ENCODE measurements at regions of chr11 and their contacts with region 1.

Region 1: GRCh38 chr11:44036811-44037657 is 10.7 kb upstream of the ACCSL start:
- DNase-seq: peak; percentile 82
- ATAC-seq: peak; percentile 99
- H3K4me3 ChIP-seq: no peak overlapping the region
- H3K27ac ChIP-seq: no peak overlapping the region
- H3K4me1 ChIP-seq: peaks cover 5% of the 10 kb centered on the region; the same call in 1 of the 2 replicates
- H3K27me3 ChIP-seq: peaks cover 14% of the 10 kb centered on the region
- CTCF ChIP-seq: peak; percentile 94
- POLR2A ChIP-seq: peak; percentile 40; the same call in 1 of the 2 replicates
- RAD21 ChIP-seq: peak; percentile 97

Region 2: DNA sequence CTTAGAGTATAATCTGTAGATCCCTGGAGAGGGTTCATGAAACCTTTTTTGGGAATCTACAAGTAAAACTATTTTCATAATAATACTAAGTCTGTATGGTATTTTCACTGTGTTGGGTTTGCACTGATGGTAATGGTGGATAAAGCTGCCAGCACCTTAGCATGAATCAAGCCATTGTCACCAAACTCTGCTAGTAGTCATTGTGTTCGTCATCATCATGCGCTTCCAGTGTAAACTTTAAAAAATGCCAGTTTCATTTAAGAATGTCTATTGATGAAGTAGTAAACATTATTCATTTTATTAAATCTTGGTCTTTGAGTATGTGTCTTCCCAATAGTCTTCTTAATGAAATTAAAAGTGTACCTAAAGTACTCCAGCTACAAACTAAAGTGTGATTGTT is 141.4 kb before region 1 on chr11:
- CTCF ChIA-PET with region 1: interaction called, 8 read pairs
- POLR2A ChIA-PET with region 1: no interaction called
- dilution Hi-C with region 1: loop called (anchors 25 kb)
- in situ Hi-C with region 1: no loop called
- intact Hi-C with region 1: loop called (anchors 1 kb)
- DNase-seq: no peak
- ATAC-seq: no peak
- H3K4me3 ChIP-seq: no peak overlapping the region
- H3K27ac ChIP-seq: no peak overlapping the region
- H3K4me1 ChIP-seq: no peaks in the 10 kb centered on the region
- H3K27me3 ChIP-seq: no peaks in the 10 kb centered on the region
- CTCF ChIP-seq: no peak
- POLR2A ChIP-seq: no peak
- RAD21 ChIP-seq: no peak

Region 3: GRCh38 chr11:43920598-43921419 is 116.2 kb before region 1 on chr11:
- CTCF ChIA-PET with region 1: no interaction called
- POLR2A ChIA-PET with region 1: no interaction called
- dilution Hi-C with region 1: loop called (anchors 25 kb)
- in situ Hi-C with region 1: no loop called
- intact Hi-C with region 1: no loop called
- DNase-seq: peak; percentile 100
- ATAC-seq: peak; percentile 79
- H3K4me3 ChIP-seq: no peak overlapping the region
- H3K27ac ChIP-seq: peak overlapping the region; percentile 46; the same call in 1 of the 2 replicates
- H3K4me1 ChIP-seq: peaks cover 45% of the 10 kb centered on the region
- H3K27me3 ChIP-seq: no peaks in the 10 kb centered on the region
- CTCF ChIP-seq: no peak
- POLR2A ChIP-seq: no peak
- RAD21 ChIP-seq: no peak

Region 4: DNA sequence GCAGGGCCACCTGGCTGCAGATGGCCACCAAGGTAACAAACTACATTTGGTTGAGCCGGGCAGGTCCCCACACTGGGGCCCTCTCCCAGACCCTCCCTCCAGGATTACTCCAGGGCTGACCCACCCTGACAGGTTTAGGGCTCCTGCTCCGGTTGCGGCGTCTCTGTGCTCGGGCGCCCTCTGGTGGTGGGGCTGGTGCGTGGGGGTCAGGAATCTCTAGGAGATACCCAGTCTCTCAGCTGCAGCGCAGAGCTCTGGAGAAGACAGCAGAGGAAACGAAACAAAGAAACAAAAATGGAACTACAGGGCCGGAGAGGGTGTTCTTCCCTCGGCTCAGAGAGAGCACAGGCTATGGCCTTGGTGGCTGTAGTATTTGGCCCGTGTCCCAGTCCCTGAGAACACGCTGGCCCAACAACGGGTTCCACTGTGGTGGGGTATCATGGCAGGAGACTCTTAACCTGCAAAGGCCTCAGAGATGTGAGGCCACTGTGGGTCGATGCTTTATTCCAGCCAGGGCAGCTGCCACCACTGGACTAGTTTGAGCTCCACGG is 92.2 kb before region 1 on chr11:
- CTCF ChIA-PET with region 1: no interaction called
- POLR2A ChIA-PET with region 1: no interaction called
- dilution Hi-C with region 1: no loop called
- in situ Hi-C with region 1: no loop called
- intact Hi-C with region 1: loop called (anchors 2 kb)
- DNase-seq: peak; percentile 27
- ATAC-seq: peak; percentile 29; the same call in 1 of the 2 replicates
- H3K4me3 ChIP-seq: no peak overlapping the region
- H3K27ac ChIP-seq: no peak overlapping the region
- H3K4me1 ChIP-seq: peaks cover 5% of the 10 kb centered on the region; the same call in 1 of the 2 replicates
- H3K27me3 ChIP-seq: peaks cover 61% of the 10 kb centered on the region
- CTCF ChIP-seq: peak; percentile 69
- POLR2A ChIP-seq: peak; percentile 70; the same call in 1 of the 2 replicates
- RAD21 ChIP-seq: peak; percentile 58

Region 5: DNA sequence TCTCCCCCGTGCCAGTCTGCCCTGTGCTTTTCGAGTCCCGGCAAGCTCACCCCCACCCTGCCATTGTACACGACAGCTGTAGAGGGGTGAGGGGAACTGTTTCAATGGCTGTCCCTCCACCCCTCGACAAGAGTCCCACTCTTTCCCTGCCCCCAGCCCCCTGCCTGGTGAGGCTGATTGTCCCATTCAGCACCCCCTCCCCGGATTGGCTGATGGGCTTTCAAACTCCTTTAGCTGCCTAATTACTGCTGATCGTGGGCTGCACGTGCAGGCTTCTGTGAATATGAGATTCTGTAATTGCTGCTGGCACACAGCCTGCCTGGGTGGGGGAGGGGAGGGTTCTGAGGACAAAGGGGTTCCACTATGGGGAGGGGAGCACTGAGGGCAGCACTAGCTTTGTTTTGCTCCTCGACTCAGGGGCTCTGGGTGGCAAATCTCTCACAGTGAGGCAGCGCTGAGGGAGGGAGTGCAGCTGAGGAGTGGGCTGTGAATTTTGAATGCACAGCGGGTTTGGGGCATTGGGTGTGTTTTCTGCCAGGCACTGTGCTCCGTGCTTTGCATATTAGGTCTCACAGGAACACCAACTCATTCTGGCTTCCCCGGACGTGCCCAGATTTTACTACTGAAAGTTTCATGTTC is 31.9 kb before region 1 on chr11:
- CTCF ChIA-PET with region 1: no interaction called
- POLR2A ChIA-PET with region 1: no interaction called
- dilution Hi-C with region 1: no loop called
- in situ Hi-C with region 1: no loop called
- intact Hi-C with region 1: no loop called
- DNase-seq: no peak
- ATAC-seq: no peak
- H3K4me3 ChIP-seq: no peak overlapping the region
- H3K27ac ChIP-seq: no peak overlapping the region
- H3K4me1 ChIP-seq: no peaks in the 10 kb centered on the region
- H3K27me3 ChIP-seq: peaks cover 8% of the 10 kb centered on the region
- CTCF ChIP-seq: no peak
- POLR2A ChIP-seq: no peak
- RAD21 ChIP-seq: no peak